CD4-positive, alpha-beta memory T cell (primary cell): ENCODE measurements at regions of chr6 and their contacts with region 1.

Region 1: DNA sequence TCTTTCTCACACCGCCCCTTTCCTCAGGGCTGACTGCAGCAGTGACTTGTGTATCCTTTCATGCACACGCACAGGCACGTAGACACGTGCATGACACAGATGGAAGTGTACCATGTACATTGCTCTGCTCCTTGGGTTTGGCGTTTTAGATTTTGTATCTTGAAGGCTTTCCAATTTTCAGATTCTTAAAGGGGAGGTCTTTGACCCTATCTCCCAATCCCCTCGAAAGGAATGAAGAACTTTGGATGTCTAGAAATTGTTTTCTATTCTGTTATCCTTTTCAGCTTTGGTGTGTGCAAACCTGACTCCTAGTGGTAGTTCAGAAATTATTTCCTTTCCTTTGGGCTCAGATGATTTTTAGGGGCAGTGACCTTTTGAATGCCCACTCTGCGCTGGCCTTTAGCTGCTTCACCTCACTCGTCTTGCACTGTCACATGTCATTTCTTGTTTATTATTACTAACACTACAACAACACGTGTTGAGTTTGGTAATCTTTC is 63.0 kb downstream of the HIVEP1 start:
- DNase-seq: peak in 4 of 5 donors; percentile 5 to 26 (median 12)
- H3K4me3 ChIP-seq: no peak overlapping the region
- H3K4me3 Mint-ChIP-seq: no peak overlapping the region
- H3K27ac ChIP-seq: no peak overlapping the region
- H3K27ac Mint-ChIP-seq: peak overlapping the region in 2 of 7 donors; percentile 16 to 63
- H3K4me1 ChIP-seq: peaks cover 12% of the 10 kb centered on the region
- H3K4me1 Mint-ChIP-seq: peaks cover 20 to 36% (median 27%) of the 10 kb centered on the region in 4 donors
- H3K27me3 ChIP-seq: no peaks in the 10 kb centered on the region
- H3K27me3 Mint-ChIP-seq: no peaks in the 10 kb centered on the region

Region 2: DNA sequence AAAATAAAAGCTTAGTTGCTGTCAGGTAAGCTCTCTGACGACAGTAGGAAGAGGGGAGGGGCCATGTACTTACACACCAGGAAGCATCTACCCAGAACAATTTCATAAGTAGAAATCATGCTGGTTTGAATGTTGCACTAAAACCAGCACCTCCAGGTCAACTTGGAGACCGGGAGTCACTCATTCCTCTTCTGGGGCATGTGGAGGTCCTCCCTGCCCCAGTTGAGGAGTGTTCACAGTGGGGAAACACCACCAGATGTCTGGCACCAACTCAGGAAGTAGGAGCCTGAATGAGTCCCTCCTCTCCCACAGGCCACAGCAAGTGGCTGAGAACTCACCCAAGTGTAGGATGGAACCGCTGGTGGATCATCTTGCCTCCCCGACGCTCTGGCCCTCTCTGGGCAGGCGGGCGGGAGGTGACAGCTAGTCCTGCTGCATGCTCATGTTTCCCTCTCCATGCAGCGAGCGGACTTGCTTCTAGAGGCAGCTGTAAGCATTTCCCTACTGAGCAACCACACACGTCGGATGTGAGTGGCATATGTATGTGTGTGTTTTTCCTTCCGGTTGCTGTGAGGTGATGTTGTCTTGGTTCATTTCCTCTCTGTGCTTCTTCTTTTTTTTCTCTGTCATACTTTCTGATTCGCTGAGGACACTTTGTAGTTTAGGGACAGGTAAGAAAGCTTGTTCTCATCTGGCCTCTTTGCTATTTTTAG is 693.2 kb before region 1 on chr6:
- CTCF ChIA-PET with region 1: no interaction called
- POLR2A ChIA-PET with region 1: no interaction called
- intact Hi-C with region 1: no loop called
- DNase-seq: peak; percentile 81 to 92 (median 88)
- H3K4me3 ChIP-seq: peak overlapping the region; percentile 66 to 82
- H3K4me3 Mint-ChIP-seq: peak overlapping the region; percentile 87 to 96 (median 94)
- H3K27ac ChIP-seq: peak overlapping the region; percentile 73
- H3K27ac Mint-ChIP-seq: peak overlapping the region; percentile 91 to 98 (median 96)
- H3K4me1 ChIP-seq: peaks cover 49% of the 10 kb centered on the region
- H3K4me1 Mint-ChIP-seq: peaks cover 49 to 75% (median 58%) of the 10 kb centered on the region in 4 donors
- H3K27me3 ChIP-seq: no peaks in the 10 kb centered on the region
- H3K27me3 Mint-ChIP-seq: no peaks in the 10 kb centered on the region

Region 3: GRCh38 chr6:11654876-11655275 is 420.2 kb before region 1 on chr6:
- CTCF ChIA-PET with region 1: interaction called, 4 read pairs
- POLR2A ChIA-PET with region 1: no interaction called
- intact Hi-C with region 1: loop called (anchors 2 kb)
- DNase-seq: no peak
- H3K4me3 ChIP-seq: no peak overlapping the region
- H3K4me3 Mint-ChIP-seq: no peak overlapping the region
- H3K27ac ChIP-seq: no peak overlapping the region
- H3K27ac Mint-ChIP-seq: no peak overlapping the region
- H3K4me1 ChIP-seq: no peaks in the 10 kb centered on the region
- H3K4me1 Mint-ChIP-seq: peaks cover 0 to 7% (median 2%) of the 10 kb centered on the region in 4 donors
- H3K27me3 ChIP-seq: no peaks in the 10 kb centered on the region
- H3K27me3 Mint-ChIP-seq: peaks cover 8 to 9% of the 10 kb centered on the region in 2 donors

Region 4: DNA sequence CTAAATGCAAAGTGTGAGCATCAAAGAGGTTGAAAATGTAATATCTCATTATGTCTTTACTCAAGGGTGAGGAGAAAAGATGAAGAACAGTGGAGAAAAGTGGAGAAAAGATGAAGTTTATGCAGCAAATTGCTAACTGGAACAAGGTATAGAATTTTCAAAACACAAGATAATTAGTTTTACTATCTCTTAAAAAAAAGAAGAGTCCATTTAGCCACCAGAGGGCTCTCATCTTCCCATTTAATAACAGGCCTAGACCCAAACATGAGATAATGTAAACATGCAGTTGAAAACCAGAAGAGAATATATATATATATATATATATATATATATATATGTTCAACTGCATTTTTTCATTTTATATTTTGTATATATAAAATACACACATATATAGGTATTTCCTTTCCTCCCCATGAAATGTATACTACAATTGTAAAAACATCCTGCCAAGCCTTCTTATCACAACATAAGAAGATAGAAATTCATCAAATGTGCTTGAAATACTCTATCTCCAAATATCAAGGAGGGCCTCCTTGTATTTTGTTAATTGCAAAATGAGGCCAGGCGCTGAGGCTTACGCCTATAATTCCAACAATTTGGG is 374.9 kb before region 1 on chr6:
- CTCF ChIA-PET with region 1: interaction called, 5 read pairs
- POLR2A ChIA-PET with region 1: no interaction called
- intact Hi-C with region 1: loop called (anchors 1 kb)
- DNase-seq: peak in 3 of 5 donors; percentile 38 to 51 (median 42)
- H3K4me3 ChIP-seq: no peak overlapping the region
- H3K4me3 Mint-ChIP-seq: no peak overlapping the region
- H3K27ac ChIP-seq: no peak overlapping the region
- H3K27ac Mint-ChIP-seq: peak overlapping the region in 1 of 7 donors; percentile 41
- H3K4me1 ChIP-seq: no peaks in the 10 kb centered on the region
- H3K4me1 Mint-ChIP-seq: peaks cover 0 to 8% (median 4%) of the 10 kb centered on the region in 4 donors
- H3K27me3 ChIP-seq: no peaks in the 10 kb centered on the region
- H3K27me3 Mint-ChIP-seq: no peaks in the 10 kb centered on the region